Activated T-helper 1 cell treated with anti-CD3 and anti-CD28 coated beads, Interleukin-12 subunit alpha, Interleukin-12 subunit beta, Interleukin-2, Interleukin-4 antibody, amounts not matched to agents 30 ng/mL and 10 ng/mL and 1 ng/mL, durations not matched to agents 14 hours and 24 hours and 36 hours (primary cell): ENCODE measurements at regions of chr2 and their contacts with region 1.

Region 1: GRCh38 chr2:37365669-37366068 is 21.2 kb downstream of the QPCT start:
- DNase-seq: no peak
- H3K4me3 Mint-ChIP-seq: no peak overlapping the region
- H3K27ac Mint-ChIP-seq: no peak overlapping the region
- H3K4me1 Mint-ChIP-seq: no peaks in the 10 kb centered on the region
- H3K27me3 Mint-ChIP-seq: peaks cover 31% of the 10 kb centered on the region

Region 2: GRCh38 chr2:37344453-37345361 is 21.0 kb before region 1 on chr2 and contains the start of gene QPCT:
- intact Hi-C with region 1: loop called (anchors 2 kb)
- DNase-seq: peak; percentile 13
- H3K4me3 Mint-ChIP-seq: peak within 1 kb of the TSS; percentile 76
- H3K27ac Mint-ChIP-seq: no peak within 1 kb of the TSS
- H3K4me1 Mint-ChIP-seq: peaks cover 23% of the 10 kb centered on the region
- H3K27me3 Mint-ChIP-seq: peaks cover 83% of the 10 kb centered on the region
- total RNA-seq, gene QPCT: 1.6 and 3.8 TPM in 2 replicates

Region 3: GRCh38 chr2:37376421-37377186 is 10.9 kb after region 1 on chr2:
- intact Hi-C with region 1: loop called (anchors 1 kb)
- DNase-seq: peak; percentile 29
- H3K4me3 Mint-ChIP-seq: peak overlapping the region; percentile 34
- H3K27ac Mint-ChIP-seq: peak overlapping the region; percentile 88
- H3K4me1 Mint-ChIP-seq: peaks cover 51% of the 10 kb centered on the region
- H3K27me3 Mint-ChIP-seq: peaks cover 51% of the 10 kb centered on the region

Region 4: DNA sequence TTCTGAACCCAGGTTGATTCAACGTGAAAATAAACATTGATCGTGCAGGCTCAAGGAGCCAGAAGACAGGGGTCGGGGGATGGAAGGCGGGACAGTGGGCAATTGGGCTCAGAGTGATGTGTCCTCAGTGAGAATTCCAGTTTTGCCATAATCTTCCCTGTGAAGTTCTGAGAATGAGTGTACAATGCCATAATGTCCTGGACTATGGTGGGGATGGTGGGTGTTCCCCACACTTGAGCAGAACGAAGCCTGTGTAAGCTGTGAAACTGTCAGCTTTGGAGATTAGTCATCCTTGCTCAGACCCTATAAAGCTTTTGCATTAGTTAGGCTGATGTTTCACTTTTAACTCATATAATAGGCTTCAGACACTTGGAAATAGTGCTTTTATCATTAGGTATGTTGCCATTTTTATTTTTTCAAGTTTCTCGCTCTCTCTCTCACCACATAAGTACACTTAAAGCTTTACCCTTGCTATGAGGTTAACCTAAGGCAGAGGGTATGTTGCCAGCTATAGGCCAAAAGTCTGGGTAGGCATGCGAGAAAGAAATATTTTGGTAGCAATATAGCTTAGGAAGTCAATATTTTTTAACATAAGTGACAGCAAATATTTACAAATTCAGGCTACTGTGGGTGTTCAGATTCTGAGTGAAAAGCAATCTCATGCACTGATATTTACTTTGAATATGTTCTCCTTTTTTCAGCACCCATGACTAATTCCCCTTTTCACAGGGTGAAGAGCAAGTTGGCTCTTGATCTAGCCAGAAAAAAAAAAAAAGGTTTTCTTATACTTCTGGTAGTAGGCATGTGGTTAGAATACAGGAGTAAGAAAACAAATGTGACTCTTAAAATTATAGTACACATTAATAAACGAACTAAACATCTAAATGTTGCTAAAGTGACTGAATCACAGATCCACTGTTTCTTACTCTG is 258.6 kb after region 1 on chr2:
- intact Hi-C with region 1: loop called (anchors 5 kb)
- DNase-seq: no peak
- H3K4me3 Mint-ChIP-seq: peak overlapping the region; percentile 32
- H3K27ac Mint-ChIP-seq: peak overlapping the region; percentile 50
- H3K4me1 Mint-ChIP-seq: peaks cover 41% of the 10 kb centered on the region
- H3K27me3 Mint-ChIP-seq: no peaks in the 10 kb centered on the region

Region 5: DNA sequence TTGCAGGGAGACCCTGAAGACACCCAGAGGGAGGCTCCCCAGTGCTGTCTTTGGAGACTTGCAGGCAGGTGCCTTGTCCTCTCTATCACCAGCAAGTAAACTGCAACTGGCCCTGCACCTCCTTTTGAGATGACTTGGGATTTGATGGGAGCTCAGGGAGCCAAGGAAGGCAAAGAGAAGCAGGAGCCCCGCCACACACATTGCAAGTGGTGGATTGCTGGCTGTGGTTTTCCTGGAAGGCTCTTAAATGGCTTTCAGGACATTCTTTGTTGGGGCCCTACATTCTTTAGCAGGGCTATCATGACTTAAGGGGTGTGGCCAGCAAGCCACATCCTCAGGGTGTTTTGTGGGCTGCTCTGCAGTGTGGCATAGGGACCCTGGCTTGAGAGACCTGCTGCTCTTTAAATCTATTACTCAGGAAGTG is 345.7 kb after region 1 on chr2:
- intact Hi-C with region 1: loop called (anchors 1 kb)
- DNase-seq: peak; percentile 30
- H3K4me3 Mint-ChIP-seq: no peak overlapping the region
- H3K27ac Mint-ChIP-seq: no peak overlapping the region
- H3K4me1 Mint-ChIP-seq: peaks cover 44% of the 10 kb centered on the region
- H3K27me3 Mint-ChIP-seq: peaks cover 4% of the 10 kb centered on the region